ENCODE measurements at regions of chr19 and their contacts with region 1.

Region 1: GRCh38 chr19:39412100-39412866 is at the start of gene PLEKHG2:
- DNase-seq: peak; percentile 99 to 100
- H3K4me3 ChIP-seq: peak within 1 kb of the TSS; percentile 66 to 97 (median 92)
- H3K27ac ChIP-seq: peak within 1 kb of the TSS; percentile 83
- H3K4me1 ChIP-seq: peaks cover 10 to 42% (median 21%) of the 10 kb centered on the region in 4 experiments; a peak in 6 of 7 replicates
- H3K27me3 ChIP-seq: no peaks in the 10 kb centered on the region
- CTCF ChIP-seq: peak; percentile 76 to 85 (median 81)
- EP300 ChIP-seq: no peak
- POLR2A ChIP-seq: peak; percentile 68 to 93
- RAD21 ChIP-seq: peak; percentile 35 to 52; a peak in 3 of 4 replicates
- total RNA-seq, gene PLEKHG2: 64.0 and 65.7 TPM in 2 replicates

Region 2: GRCh38 chr19:39372047-39372802 is 40.1 kb before region 1 on chr19:
- CTCF ChIA-PET with region 1: interaction called, 10 read pairs
- POLR2A ChIA-PET with region 1: no interaction called
- DNase-seq: no peak
- H3K4me3 ChIP-seq: no peak overlapping the region
- H3K27ac ChIP-seq: no peak overlapping the region
- H3K4me1 ChIP-seq: no peaks in the 10 kb centered on the region
- H3K27me3 ChIP-seq: no peaks in the 10 kb centered on the region
- CTCF ChIP-seq: no peak
- EP300 ChIP-seq: no peak
- POLR2A ChIP-seq: no peak
- RAD21 ChIP-seq: no peak

Region 3: GRCh38 chr19:39397360-39398296 is 14.7 kb before region 1 on chr19:
- CTCF ChIA-PET with region 1: interaction called, 128 read pairs
- POLR2A ChIA-PET with region 1: interaction called, 234 read pairs
- DNase-seq: peak in 1 of 2 experiments; percentile 95
- H3K4me3 ChIP-seq: no peak overlapping the region
- H3K27ac ChIP-seq: no peak overlapping the region
- H3K4me1 ChIP-seq: peaks cover 6 to 21% (median 13%) of the 10 kb centered on the region in 4 experiments
- H3K27me3 ChIP-seq: no peaks in the 10 kb centered on the region
- CTCF ChIP-seq: peak; percentile 92 to 98 (median 98)
- EP300 ChIP-seq: no peak
- POLR2A ChIP-seq: no peak; a peak in 1 of 3 replicates
- RAD21 ChIP-seq: peak; percentile 92 to 96

Region 4: GRCh38 chr19:39428283-39429112 is 16.2 kb after region 1 on chr19:
- CTCF ChIA-PET with region 1: interaction called, 15 read pairs
- POLR2A ChIA-PET with region 1: interaction called, 1,154 read pairs
- DNase-seq: peak in 1 of 2 experiments; percentile 88
- H3K4me3 ChIP-seq: peak overlapping the region in 3 of 4 experiments; percentile 18 to 34 (median 32); a peak in 3 of 8 replicates
- H3K27ac ChIP-seq: peak overlapping the region; percentile 86
- H3K4me1 ChIP-seq: peaks cover 5 to 18% (median 13%) of the 10 kb centered on the region in 4 experiments
- H3K27me3 ChIP-seq: no peaks in the 10 kb centered on the region; a peak in 1 of 7 replicates
- CTCF ChIP-seq: no peak
- EP300 ChIP-seq: peak in 1 of 2 experiments; percentile 92; a peak in 1 of 3 replicates
- POLR2A ChIP-seq: peak; percentile 40 to 80; a peak in 2 of 3 replicates
- RAD21 ChIP-seq: peak in 1 of 2 experiments; percentile 3; a peak in 1 of 4 replicates

Region 5: DNA sequence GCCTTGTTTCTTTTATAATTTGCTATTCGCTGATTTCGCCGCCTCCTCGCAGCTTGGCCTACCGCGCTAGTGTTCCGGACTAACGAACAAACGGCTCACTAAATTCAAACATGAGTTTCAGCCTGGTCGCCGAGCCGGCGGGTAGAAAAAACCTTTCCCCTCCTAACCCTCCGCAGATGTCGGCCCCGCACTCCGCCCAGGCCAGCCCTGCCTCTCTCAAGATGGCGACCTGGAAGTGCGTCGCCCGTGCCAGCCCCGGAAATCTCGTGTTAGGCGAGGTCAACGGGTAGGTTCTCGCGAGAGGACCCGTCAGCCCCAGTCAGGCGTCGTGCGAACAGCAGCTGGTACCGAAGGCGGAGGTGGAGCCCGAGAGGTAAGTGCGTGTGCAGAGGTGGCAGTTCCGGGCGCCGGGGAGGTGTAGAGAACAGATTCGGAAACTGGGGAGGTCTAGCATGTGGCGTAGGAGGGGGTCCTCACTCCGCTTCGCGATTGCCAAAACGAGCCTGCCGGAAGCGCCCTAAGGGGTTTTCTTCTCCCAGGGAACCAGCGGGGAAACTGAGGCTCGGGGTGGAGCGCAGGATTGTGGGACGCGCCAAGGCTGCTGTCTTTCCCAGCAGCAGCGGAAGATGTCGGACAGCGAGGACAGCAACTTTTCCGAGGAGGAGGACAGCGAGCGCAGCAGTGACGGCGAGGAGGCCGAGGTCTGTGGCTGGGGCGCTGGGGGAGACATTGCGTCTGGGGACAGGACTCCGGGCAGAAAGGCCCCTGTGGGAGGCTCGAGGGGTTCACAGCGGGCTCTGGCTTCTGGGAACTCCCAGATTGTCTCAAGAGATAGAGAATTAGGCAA is 33.2 kb after region 1 on chr19 and contains the start of gene SUPT5H:
- CTCF ChIA-PET with region 1: interaction called, 6 read pairs
- POLR2A ChIA-PET with region 1: interaction called, 1,154 read pairs
- DNase-seq: peak; percentile 95
- H3K4me3 ChIP-seq: peak within 1 kb of the TSS; percentile 80 to 94 (median 88)
- H3K27ac ChIP-seq: peak within 1 kb of the TSS; percentile 79
- H3K4me1 ChIP-seq: peaks cover 0 to 3% (median under 1%) of the 10 kb centered on the region in 4 experiments; a peak in 3 of 7 replicates
- H3K27me3 ChIP-seq: no peaks in the 10 kb centered on the region
- CTCF ChIP-seq: no peak
- EP300 ChIP-seq: no peak
- POLR2A ChIP-seq: peak; percentile 87 to 89
- RAD21 ChIP-seq: no peak
- total RNA-seq, gene SUPT5H: 111 and 118 TPM in 2 replicates

Region 6: DNA sequence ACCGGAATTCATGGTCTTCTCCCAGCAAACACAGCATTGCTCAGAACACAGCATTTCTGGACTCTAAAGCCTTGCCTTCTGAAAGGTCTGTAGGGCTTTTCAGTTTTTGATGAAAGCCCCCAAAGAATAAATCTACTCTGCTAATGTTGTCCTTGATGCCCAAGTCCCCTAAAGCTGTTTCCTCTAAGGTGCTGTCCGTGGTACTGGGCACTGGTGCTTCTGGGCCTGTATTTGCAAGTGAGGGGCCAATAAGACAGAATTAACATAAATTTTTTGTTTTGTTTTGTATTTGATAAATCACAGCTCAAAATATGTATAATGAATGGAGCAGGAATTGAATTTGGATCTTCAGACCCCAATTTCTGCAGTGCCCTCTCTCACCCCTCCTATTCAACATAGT is 178.0 kb after region 1 on chr19:
- CTCF ChIA-PET with region 1: no interaction called
- POLR2A ChIA-PET with region 1: no interaction called
- DNase-seq: peak in 1 of 2 experiments; percentile 53
- H3K4me3 ChIP-seq: no peak overlapping the region
- H3K27ac ChIP-seq: no peak overlapping the region
- H3K4me1 ChIP-seq: no peaks in the 10 kb centered on the region
- H3K27me3 ChIP-seq: no peaks in the 10 kb centered on the region
- CTCF ChIP-seq: no peak
- EP300 ChIP-seq: no peak
- POLR2A ChIP-seq: no peak
- RAD21 ChIP-seq: no peak

Measured in H1 (cell line).